PC-9 (cell line): ENCODE measurements at regions of chr12 and their contacts with region 1.

Region 1: GRCh38 chr12:50400598-50401364 is at the start of gene LARP4:
- DNase-seq: peak; percentile 86 to 93
- H3K4me3 ChIP-seq: peak within 1 kb of the TSS; percentile 83
- H3K27ac ChIP-seq: peak within 1 kb of the TSS; percentile 88
- H3K4me1 ChIP-seq: peaks cover 50% of the 10 kb centered on the region
- H3K27me3 ChIP-seq: no peaks in the 10 kb centered on the region
- CTCF ChIP-seq: no peak
- total RNA-seq, gene LARP4: 49.2 and 74.2 TPM in 2 replicates

Region 2: DNA sequence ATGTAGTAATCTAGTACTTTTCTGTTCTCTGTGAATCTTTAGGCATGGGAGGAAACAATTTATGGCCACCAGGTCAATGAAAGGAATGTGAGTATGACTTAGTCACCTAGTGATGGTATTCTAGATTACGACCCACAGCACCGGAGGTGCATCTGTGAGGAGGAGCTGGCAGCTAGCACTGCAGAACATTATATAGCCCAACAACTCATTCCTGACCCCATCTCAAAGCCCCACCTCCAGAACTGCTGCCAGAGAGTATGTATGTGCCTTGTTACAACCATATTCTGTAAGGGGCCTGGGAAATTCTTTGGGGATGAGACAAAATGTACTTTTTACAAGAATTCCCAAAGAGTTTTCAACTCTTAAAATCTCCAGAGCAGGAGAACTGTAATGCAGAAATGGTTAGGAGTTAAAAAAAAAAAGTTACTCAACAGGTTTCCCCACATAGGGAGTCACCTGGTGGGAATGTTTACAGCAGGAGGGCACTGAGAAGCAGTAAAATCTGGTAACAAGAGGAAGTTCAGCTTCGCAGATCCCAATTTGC is 198.7 kb before region 1 on chr12:
- CTCF ChIA-PET with region 1: no interaction called
- POLR2A ChIA-PET with region 1: no interaction called
- intact Hi-C with region 1: loop called (anchors 2 kb)
- DNase-seq: peak; percentile 75 to 96
- H3K4me3 ChIP-seq: peak overlapping the region; percentile 54; the same call in 1 of the 2 replicates
- H3K27ac ChIP-seq: peak overlapping the region; percentile 100
- H3K4me1 ChIP-seq: peaks cover 59% of the 10 kb centered on the region
- H3K27me3 ChIP-seq: no peaks in the 10 kb centered on the region
- CTCF ChIP-seq: no peak

Region 3: GRCh38 chr12:50326636-50327284 is 74.0 kb before region 1 on chr12:
- CTCF ChIA-PET with region 1: no interaction called
- POLR2A ChIA-PET with region 1: no interaction called
- intact Hi-C with region 1: loop called (anchors 5 kb)
- DNase-seq: peak in 1 of 2 experiments; percentile 74
- H3K4me3 ChIP-seq: peak overlapping the region; percentile 6; the same call in 1 of the 2 replicates
- H3K27ac ChIP-seq: peak overlapping the region; percentile 30
- H3K4me1 ChIP-seq: peaks cover 34% of the 10 kb centered on the region
- H3K27me3 ChIP-seq: no peaks in the 10 kb centered on the region
- CTCF ChIP-seq: no peak

Region 4: DNA sequence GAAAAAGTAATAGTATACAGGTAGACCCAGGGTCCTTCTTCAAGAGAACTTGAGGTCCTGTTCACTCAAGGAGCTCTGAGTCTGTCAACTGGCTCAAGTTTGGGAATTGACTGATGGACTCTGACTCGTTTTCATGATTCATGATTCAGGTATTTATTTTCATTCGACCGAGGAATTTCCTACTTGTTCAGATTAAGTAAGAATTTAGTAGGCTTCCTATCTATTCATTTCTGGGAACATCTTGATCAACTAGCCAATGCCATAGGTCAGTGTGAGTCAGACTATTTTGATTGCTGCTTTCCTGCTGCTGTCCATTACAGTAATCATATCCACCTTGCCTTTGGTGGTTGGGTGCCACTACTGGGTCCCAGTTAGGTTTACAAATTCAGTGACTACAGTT is 10.5 kb before region 1 on chr12:
- CTCF ChIA-PET with region 1: no interaction called
- POLR2A ChIA-PET with region 1: interaction called, 11 read pairs
- intact Hi-C with region 1: no loop called
- DNase-seq: peak; percentile 33 to 96
- H3K4me3 ChIP-seq: no peak overlapping the region
- H3K27ac ChIP-seq: peak overlapping the region; percentile 64
- H3K4me1 ChIP-seq: peaks cover 37% of the 10 kb centered on the region
- H3K27me3 ChIP-seq: no peaks in the 10 kb centered on the region
- CTCF ChIP-seq: no peak

Region 5: GRCh38 chr12:50425589-50426258 is 24.9 kb after region 1 on chr12:
- CTCF ChIA-PET with region 1: interaction called, 10 read pairs
- POLR2A ChIA-PET with region 1: no interaction called
- intact Hi-C with region 1: no loop called
- DNase-seq: no peak
- H3K4me3 ChIP-seq: no peak overlapping the region
- H3K27ac ChIP-seq: no peak overlapping the region
- H3K4me1 ChIP-seq: no peaks in the 10 kb centered on the region
- H3K27me3 ChIP-seq: no peaks in the 10 kb centered on the region
- CTCF ChIP-seq: no peak

Region 6: GRCh38 chr12:50527359-50527726 is 126.6 kb after region 1 on chr12:
- CTCF ChIA-PET with region 1: no interaction called
- POLR2A ChIA-PET with region 1: interaction called, 10 read pairs
- intact Hi-C with region 1: no loop called
- DNase-seq: no peak
- H3K4me3 ChIP-seq: no peak overlapping the region
- H3K27ac ChIP-seq: no peak overlapping the region
- H3K4me1 ChIP-seq: peaks cover 38% of the 10 kb centered on the region
- H3K27me3 ChIP-seq: no peaks in the 10 kb centered on the region
- CTCF ChIP-seq: no peak